GM23248 (cell line): ENCODE measurements at regions of chr10 and their contacts with region 1.

Region 1: GRCh38 chr10:112949875-112950507 is at the start of gene TCF7L2:
- DNase-seq: peak; percentile 98
- H3K4me3 ChIP-seq: peak within 1 kb of the TSS; percentile 88
- H3K27ac ChIP-seq: peak within 1 kb of the TSS; percentile 92
- H3K4me1 ChIP-seq: peaks cover 16% of the 10 kb centered on the region
- H3K27me3 ChIP-seq: no peaks in the 10 kb centered on the region
- total RNA-seq, gene TCF7L2: 4.2 and 6.2 TPM in 2 replicates

Region 2: DNA sequence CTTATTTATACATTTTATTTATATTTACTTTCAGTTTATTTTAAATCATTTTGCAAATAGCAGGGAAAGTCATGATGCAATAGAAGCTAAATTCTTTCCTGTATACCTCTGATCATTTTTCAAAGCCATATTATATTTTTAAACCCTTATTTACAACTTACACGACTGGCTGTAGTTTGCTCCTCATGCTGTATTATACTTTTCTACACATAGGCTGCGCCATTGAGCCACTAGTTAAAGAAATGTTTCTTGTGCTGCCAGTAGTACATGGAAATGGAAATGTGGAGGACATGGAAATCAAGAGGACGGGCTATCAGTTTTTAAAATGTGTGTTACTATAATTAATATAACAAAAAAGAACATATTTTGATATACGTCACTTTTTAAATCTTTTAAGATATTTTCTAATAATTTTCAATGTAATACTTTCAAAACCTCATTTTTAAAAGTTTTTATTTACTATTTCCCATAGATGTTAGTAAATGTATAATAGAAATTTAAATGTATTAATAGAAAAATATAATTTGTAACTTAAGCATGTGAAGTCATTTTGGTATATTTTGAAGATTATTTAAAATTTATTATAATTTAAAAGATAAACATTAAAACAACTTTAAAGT is 384.4 kb before region 1 on chr10:
- in situ Hi-C with region 1: loop called (anchors 10 kb)
- DNase-seq: peak; percentile 81
- H3K4me3 ChIP-seq: no peak overlapping the region
- H3K27ac ChIP-seq: no peak overlapping the region
- H3K4me1 ChIP-seq: peaks cover 11% of the 10 kb centered on the region
- H3K27me3 ChIP-seq: no peaks in the 10 kb centered on the region

Region 3: GRCh38 chr10:112649006-112649821 is 300.8 kb before region 1 on chr10:
- in situ Hi-C with region 1: no loop called
- DNase-seq: peak; percentile 52
- H3K4me3 ChIP-seq: no peak overlapping the region
- H3K27ac ChIP-seq: no peak overlapping the region
- H3K4me1 ChIP-seq: peaks cover 20% of the 10 kb centered on the region
- H3K27me3 ChIP-seq: no peaks in the 10 kb centered on the region

Region 4: DNA sequence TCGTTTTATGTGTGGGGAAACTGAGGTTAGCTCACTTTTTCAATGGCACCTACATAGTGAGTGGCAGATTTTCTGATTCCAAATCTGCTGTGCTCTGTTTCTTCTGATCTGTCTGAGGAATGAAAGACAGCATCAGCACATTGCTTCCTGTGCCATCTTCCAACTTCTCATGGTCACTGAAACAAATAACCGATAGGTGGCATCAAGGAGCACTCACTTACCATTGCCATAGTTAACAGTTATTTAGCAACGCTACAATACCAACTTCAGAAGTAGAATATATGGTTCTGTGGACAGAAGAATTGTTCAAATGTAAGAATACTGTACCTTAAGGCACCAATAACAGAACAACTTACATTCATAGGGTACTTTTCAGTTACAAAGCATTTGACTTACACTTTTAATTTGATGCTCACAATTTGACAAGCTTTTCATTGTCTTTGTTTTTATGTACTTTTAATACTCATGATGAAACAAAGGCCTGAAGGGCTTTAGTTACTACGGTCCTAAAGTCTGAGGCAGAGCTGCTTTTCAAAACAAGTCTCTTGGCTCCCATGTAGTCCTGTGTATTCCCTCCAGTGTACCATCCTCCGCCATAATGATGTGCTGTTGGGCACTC is 228.8 kb before region 1 on chr10:
- in situ Hi-C with region 1: loop called (anchors 10 kb)
- DNase-seq: peak; percentile 71
- H3K4me3 ChIP-seq: no peak overlapping the region
- H3K27ac ChIP-seq: no peak overlapping the region
- H3K4me1 ChIP-seq: peaks cover 7% of the 10 kb centered on the region; the same call in 1 of the 2 replicates
- H3K27me3 ChIP-seq: no peaks in the 10 kb centered on the region

Region 5: GRCh38 chr10:113126229-113127201 is 176.5 kb after region 1 on chr10:
- in situ Hi-C with region 1: loop called (anchors 10 kb)
- DNase-seq: peak; percentile 95
- H3K4me3 ChIP-seq: peak overlapping the region; percentile 77
- H3K27ac ChIP-seq: peak overlapping the region; percentile 95
- H3K4me1 ChIP-seq: peaks cover 49% of the 10 kb centered on the region
- H3K27me3 ChIP-seq: no peaks in the 10 kb centered on the region

Region 6: DNA sequence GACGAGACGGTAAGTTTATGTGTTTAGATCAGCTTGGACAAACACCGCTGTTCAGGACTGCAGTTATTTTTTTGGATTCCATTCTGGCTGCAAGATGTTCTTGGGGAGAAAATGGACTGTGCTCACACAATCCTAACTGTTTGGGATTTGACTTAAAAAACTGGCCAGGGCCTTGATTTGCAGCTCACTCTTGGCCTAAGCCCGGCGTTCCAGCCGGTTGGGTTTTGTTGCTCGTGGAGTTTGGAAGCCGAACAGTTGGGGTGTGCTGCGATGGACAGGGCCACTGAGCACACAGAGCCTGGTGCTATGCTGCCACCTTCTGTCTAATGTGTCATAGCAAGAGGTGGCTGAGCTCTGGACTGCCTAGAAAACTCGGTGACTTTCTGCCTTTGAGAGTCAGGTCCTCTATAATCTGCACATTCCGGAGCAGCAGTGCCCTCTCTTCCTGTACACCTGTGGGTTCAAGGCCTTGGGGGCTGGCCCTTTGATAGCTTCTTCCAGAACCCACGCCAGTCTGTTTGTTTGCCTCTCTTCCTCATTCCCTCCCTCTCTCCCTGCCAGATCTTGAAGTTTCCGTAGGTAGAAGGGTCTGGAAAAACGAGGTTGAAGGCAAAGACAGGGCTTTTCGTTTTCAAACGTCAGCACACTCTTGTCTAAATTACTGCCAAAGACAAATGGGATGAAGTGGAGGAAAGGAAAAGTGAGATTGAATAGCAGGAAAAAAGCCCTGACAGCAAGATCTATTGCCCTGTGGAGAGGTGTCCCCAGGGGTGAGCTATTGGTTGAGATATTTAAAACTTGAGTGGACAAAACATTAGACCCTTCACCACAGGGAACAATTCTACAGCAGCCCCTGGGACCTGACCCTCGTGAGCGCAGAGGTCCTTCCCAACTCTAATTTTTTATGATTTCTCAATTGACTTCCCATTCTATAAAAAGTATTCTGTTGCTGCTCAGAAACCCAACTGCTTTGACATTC is 435.3 kb after region 1 on chr10:
- in situ Hi-C with region 1: loop called (anchors 25 kb)
- DNase-seq: peak; percentile 94
- H3K4me3 ChIP-seq: peak overlapping the region; percentile 62
- H3K27ac ChIP-seq: peak overlapping the region; percentile 7
- H3K4me1 ChIP-seq: peaks cover 51% of the 10 kb centered on the region
- H3K27me3 ChIP-seq: no peaks in the 10 kb centered on the region